Natural killer cell (primary cell): ENCODE measurements at regions of chr15 and their contacts with region 1.

Region 1: DNA sequence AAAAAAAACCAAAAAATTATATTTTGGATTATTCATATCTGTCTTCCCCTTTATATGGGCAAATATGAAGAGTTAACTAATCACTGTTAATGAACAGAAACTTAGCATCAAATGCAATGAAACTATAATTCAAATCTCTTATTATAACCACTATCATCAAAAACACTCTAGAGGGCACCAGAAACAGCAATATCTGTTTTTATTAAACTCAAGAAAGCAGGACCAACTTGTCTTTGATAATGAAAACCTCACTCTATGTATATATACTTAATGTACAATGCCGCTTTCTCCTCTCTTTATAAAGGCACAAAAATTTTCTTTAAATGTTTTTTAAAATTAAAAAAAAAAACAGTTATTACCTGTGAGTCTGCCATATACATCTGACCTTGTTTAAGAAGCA is 92.7 kb downstream of the UACA start:
- DNase-seq: peak in 1 of 2 donors; percentile 44
- ATAC-seq: peak in 1 of 3 donors; percentile 38
- H3K4me3 ChIP-seq: no peak overlapping the region
- H3K4me3 Mint-ChIP-seq: no peak overlapping the region
- H3K27ac ChIP-seq: no peak overlapping the region
- H3K27ac Mint-ChIP-seq: no peak overlapping the region
- H3K4me1 ChIP-seq: peaks cover 8% of the 10 kb centered on the region
- H3K4me1 Mint-ChIP-seq: peaks cover 22 to 25% of the 10 kb centered on the region in 2 donors
- H3K27me3 ChIP-seq: peaks cover 9% of the 10 kb centered on the region
- H3K27me3 Mint-ChIP-seq: no peaks in the 10 kb centered on the region
- CTCF ChIP-seq: peak; percentile 64

Region 2: DNA sequence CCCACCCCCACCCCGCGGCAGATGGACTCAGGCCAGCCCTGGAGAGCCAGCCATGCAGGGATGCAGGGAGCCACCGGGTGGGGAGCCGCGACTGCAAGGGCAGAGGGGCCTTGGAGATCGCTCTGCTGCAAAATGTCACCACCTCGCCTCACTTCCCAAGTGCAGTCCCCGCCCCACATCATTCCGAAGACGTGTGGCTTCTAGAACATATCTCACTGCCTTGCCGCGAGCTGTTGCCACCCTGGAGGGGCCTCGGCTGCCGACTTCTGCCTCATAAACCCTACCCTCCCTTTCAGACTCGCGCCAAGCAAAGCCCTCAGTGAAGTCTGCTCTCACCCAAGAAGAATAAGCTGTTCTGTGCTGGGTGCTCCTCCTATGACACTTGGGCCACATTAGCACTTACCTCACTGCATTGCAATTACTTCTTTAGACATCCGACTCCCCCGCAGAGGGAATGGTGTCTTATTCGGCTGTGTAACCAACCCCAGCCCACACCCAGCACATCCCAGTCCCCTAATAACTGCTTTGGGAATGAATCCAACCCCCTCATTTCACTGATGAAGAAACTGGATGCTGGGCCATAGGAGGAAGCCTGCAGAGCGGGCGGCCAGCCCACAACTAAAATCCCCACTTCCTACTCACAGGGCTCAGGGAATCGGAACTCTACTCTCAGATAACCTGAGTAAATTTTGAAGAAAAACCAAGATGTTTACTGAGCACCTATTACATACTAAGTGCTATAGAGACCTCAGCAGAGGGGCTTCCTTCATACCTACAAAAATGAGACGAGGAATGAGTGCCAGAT is 581.6 kb before region 1 on chr15:
- intact Hi-C with region 1: no loop called
- DNase-seq: no peak
- ATAC-seq: no peak
- H3K4me3 ChIP-seq: no peak overlapping the region
- H3K4me3 Mint-ChIP-seq: no peak overlapping the region
- H3K27ac ChIP-seq: no peak overlapping the region
- H3K27ac Mint-ChIP-seq: no peak overlapping the region
- H3K4me1 ChIP-seq: peaks cover 47% of the 10 kb centered on the region
- H3K4me1 Mint-ChIP-seq: peaks cover 36 to 73% of the 10 kb centered on the region in 2 donors
- H3K27me3 ChIP-seq: no peaks in the 10 kb centered on the region
- H3K27me3 Mint-ChIP-seq: peaks cover 23 to 57% of the 10 kb centered on the region in 2 donors
- CTCF ChIP-seq: no peak

Region 3: DNA sequence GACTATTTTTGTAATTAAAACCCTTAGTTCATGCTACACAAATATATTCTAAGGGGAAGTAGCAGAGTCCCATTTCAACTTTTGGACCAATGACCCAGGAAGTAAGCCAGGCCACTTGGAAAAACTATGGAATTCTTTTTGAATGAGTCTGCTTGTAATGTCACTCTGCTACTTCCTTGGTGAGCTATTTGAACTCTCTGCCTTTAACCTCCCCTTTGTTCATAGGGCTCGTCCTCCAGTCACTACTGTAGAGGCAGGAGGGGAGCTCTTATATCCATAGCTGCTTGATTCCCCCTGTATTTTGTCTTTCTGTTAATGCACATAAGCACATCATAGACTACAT is 26.9 kb before region 1 on chr15:
- intact Hi-C with region 1: no loop called
- DNase-seq: no peak
- ATAC-seq: no peak
- H3K4me3 ChIP-seq: no peak overlapping the region
- H3K4me3 Mint-ChIP-seq: no peak overlapping the region
- H3K27ac ChIP-seq: no peak overlapping the region
- H3K27ac Mint-ChIP-seq: no peak overlapping the region
- H3K4me1 ChIP-seq: no peaks in the 10 kb centered on the region
- H3K4me1 Mint-ChIP-seq: no peaks in the 10 kb centered on the region
- H3K27me3 ChIP-seq: peaks cover 2% of the 10 kb centered on the region
- H3K27me3 Mint-ChIP-seq: peaks cover 12 to 29% of the 10 kb centered on the region in 2 donors
- CTCF ChIP-seq: no peak

Region 4: GRCh38 chr15:70722266-70723121 is 51.8 kb after region 1 on chr15:
- intact Hi-C with region 1: loop called (anchors 10 kb)
- DNase-seq: peak in 1 of 2 donors; percentile 72
- ATAC-seq: peak in 1 of 3 donors; percentile 51
- H3K4me3 ChIP-seq: no peak overlapping the region
- H3K4me3 Mint-ChIP-seq: no peak overlapping the region
- H3K27ac ChIP-seq: no peak overlapping the region
- H3K27ac Mint-ChIP-seq: no peak overlapping the region
- H3K4me1 ChIP-seq: no peaks in the 10 kb centered on the region
- H3K4me1 Mint-ChIP-seq: peaks cover 5% of the 10 kb centered on the region in 2 donors
- H3K27me3 ChIP-seq: peaks cover 7% of the 10 kb centered on the region
- H3K27me3 Mint-ChIP-seq: peaks cover 3 to 15% of the 10 kb centered on the region in 2 donors
- CTCF ChIP-seq: peak; percentile 92

Region 5: GRCh38 chr15:70810916-70811578 is 140.4 kb after region 1 on chr15:
- intact Hi-C with region 1: loop called (anchors 2 kb)
- DNase-seq: no peak
- ATAC-seq: no peak
- H3K4me3 ChIP-seq: no peak overlapping the region
- H3K4me3 Mint-ChIP-seq: no peak overlapping the region
- H3K27ac ChIP-seq: no peak overlapping the region
- H3K27ac Mint-ChIP-seq: no peak overlapping the region
- H3K4me1 ChIP-seq: no peaks in the 10 kb centered on the region
- H3K4me1 Mint-ChIP-seq: peaks cover 6% of the 10 kb centered on the region in 2 donors
- H3K27me3 ChIP-seq: no peaks in the 10 kb centered on the region
- H3K27me3 Mint-ChIP-seq: peaks cover 0 to 6% of the 10 kb centered on the region in 2 donors
- CTCF ChIP-seq: no peak

Region 6: DNA sequence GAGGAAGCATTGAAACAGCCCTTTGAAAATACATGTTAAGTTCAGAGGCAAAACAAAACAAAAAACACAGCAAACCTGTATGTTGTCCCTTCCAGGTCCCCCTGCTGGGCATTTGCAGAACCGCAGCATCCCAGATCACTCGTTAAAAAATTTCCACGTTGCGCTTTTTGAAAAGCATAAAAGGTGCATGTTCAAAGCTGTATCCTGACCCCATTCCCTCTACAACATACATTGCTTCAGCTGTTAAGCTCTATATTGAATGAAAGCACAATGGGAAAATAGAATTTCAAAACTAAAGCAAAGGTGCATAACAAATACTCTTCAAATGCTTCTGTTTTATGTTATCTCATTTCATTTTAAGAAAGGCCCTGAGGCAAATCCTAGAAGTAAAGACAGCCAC is 772.9 kb after region 1 on chr15:
- intact Hi-C with region 1: loop called (anchors 5 kb)
- DNase-seq: peak in 1 of 2 donors; percentile 45
- ATAC-seq: peak in 1 of 3 donors; percentile 34
- H3K4me3 ChIP-seq: no peak overlapping the region
- H3K4me3 Mint-ChIP-seq: no peak overlapping the region
- H3K27ac ChIP-seq: no peak overlapping the region
- H3K27ac Mint-ChIP-seq: no peak overlapping the region
- H3K4me1 ChIP-seq: no peaks in the 10 kb centered on the region
- H3K4me1 Mint-ChIP-seq: no peaks in the 10 kb centered on the region
- H3K27me3 ChIP-seq: no peaks in the 10 kb centered on the region
- H3K27me3 Mint-ChIP-seq: peaks cover 4 to 7% of the 10 kb centered on the region in 2 donors
- CTCF ChIP-seq: peak; percentile 82